PC-3 (cell line): ENCODE measurements at regions of chr16 and their contacts with region 1.

Region 1: DNA sequence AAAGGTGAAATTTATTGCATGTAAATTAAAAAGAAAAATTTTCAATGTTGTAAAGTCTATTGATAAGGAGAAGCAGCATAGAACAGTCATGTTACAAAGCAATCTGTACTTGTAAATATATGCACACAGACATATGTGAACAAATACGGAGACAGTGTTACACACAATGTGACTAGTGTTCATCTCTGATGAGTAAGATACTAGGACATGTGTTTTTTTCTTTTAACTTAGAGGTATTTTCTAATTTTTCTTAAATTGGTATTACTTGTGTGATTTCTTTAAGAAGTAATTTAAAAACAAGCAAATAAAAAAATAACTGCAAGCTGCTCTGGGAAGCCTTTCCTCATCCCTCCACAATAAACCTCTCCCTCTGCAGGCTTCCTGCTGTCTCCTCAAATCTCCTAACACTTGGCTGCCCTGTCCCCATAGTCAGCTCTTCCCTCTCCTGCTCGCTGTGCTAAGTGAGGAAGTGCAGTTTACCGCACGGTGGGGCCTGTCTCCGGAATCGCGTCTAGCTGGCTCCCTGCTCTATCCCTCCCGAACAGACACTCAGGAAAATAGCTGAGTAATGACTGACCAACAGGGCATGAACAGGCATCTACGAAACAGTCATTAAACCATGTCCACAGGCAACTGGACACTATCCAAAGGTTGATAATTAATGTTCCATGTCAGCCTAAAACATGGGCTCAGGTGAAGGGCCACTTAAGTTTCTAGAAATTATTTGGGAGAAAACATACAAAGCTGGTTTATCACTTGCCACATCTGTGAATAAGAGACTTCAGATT is 35.9 kb downstream of the CMTM4 start:
- DNase-seq: peak; percentile 73
- ATAC-seq: peak; percentile 96
- H3K4me3 ChIP-seq: peak overlapping the region; percentile 5; the same call in 1 of the 2 replicates
- H3K27ac ChIP-seq: peak overlapping the region; percentile 65
- H3K4me1 ChIP-seq: peaks cover 21% of the 10 kb centered on the region
- H3K27me3 ChIP-seq: no peaks in the 10 kb centered on the region
- CTCF ChIP-seq: 0 out of 2 replicates have a peak, but pooled peaks have one; percentile 14

Region 2: GRCh38 chr16:66696669-66697630 is 36.3 kb after region 1 on chr16 and contains the start of gene CMTM4:
- CTCF ChIA-PET with region 1: no interaction called
- POLR2A ChIA-PET with region 1: no interaction called
- intact Hi-C with region 1: loop called (anchors 5 kb)
- DNase-seq: peak; percentile 87
- ATAC-seq: peak; percentile 84
- H3K4me3 ChIP-seq: peak within 1 kb of the TSS; percentile 87
- H3K27ac ChIP-seq: no peak within 1 kb of the TSS
- H3K4me1 ChIP-seq: peaks cover 30% of the 10 kb centered on the region
- H3K27me3 ChIP-seq: no peaks in the 10 kb centered on the region
- CTCF ChIP-seq: peak; percentile 32; the same call in 1 of the 2 replicates
- total RNA-seq, gene CMTM4: 16.9 and 17.0 TPM in 2 replicates